Vagina (tissue), 2 donors: ENCODE measurements at regions of chr18 and their contacts with region 1.

Region 1: DNA sequence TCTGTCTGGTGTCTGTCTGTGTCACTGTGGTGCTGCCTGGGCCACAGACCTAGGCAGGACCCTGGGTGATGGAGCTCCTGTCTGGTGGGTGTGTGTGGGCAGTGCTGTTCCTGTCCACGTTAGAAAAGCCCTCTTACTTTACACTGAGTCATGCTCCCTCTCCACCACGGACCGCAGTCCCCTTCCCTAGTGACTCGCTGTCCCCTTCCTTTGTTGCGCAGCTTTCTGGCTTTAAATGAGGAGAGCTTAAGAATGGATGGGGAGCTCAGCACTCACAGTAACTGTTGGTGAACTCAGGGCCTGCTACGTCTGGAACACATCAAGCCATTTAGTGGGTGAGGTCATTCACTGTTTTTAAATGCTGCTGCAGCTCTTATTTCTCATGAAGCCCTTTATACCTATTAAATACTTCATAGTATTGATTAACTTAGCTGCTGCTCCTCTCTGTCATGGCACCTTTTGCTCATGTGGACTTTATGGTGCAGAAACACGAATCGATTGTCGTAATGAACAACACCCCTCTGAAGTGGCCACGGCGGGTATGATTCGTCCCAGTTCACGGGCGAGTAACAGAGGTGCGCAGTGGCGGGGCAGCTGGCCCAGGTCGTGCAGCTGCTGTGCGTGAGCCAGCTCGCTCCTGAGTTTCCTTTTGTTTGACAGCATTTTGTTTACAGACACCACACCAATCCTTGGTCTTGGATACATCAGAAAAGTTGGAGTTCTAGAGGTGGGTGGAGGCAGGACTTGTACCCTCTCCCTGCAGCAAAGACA is 100.4 kb downstream of the LDLRAD4 start:
- DNase-seq: no peak
- H3K4me3 ChIP-seq: no peak overlapping the region
- H3K27ac ChIP-seq: no peak overlapping the region
- H3K4me1 ChIP-seq: peaks cover 19% of the 10 kb centered on the region
- H3K27me3 ChIP-seq: no peaks in the 10 kb centered on the region
- CTCF ChIP-seq: no peak
- POLR2A ChIP-seq: no peak

Region 2: DNA sequence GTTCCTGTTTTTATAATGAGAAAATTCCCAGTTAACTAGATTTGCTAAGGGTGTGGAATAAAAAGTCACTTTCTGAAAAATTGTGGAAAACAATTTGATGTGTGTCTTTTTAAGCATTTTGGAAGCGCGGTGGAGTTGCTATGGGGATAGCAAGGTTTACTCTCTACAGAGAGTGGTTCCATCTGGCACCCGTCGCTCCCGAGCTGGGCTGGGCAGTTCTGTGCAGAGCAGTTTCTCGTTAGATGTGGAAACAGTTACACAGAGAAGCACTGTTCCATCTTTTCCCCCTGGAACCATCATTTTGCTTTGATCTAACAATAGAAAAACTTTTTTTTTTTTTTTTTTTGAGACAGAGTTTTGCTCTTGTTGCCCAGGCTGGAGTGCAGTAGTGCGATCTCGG is 82.9 kb before region 1 on chr18:
- intact Hi-C with region 1: loop called (anchors 10 kb)
- DNase-seq: no peak
- H3K4me3 ChIP-seq: no peak overlapping the region
- H3K27ac ChIP-seq: no peak overlapping the region
- H3K4me1 ChIP-seq: peaks cover 25% of the 10 kb centered on the region
- H3K27me3 ChIP-seq: no peaks in the 10 kb centered on the region
- CTCF ChIP-seq: no peak
- POLR2A ChIP-seq: no peak